ENCODE measurements at regions of chr19 and their contacts with region 1.

Region 1: DNA sequence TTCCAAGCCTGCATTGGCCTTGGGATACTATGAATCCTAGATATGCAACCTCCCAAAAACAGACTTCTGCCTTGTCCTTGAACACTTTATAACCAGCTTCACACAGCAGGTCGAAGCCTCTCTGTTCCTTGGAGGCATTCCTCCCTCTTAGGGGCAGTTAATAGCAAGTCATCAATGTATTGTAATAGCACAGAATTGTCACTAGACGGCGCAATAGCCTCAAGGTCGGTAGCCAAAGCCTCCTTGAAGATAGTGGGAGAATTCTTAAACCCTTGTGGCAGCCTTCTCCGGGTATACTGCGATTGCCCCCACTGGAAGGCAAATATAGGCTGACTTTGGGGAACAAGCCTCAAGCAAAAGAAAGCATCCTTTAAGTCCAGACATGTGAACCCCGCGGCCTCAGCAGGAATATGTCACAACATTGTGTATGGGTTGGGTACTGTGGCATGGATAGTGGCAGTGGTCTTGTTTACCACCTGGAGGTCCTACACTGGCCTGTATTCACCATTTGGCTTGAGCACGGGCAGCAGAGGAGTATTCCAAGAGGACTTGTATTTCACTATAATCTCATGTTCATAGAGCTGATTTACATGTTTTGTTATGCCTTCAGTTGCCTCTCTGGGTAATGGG is 61.1 kb downstream of the ZNF431 start:
- DNase-seq: peak; percentile 74 to 90 (median 79)
- H3K4me3 ChIP-seq: no peak overlapping the region
- H3K27ac ChIP-seq: no peak overlapping the region
- H3K4me1 ChIP-seq: no peaks in the 10 kb centered on the region
- H3K27me3 ChIP-seq: no peaks in the 10 kb centered on the region

Region 2: GRCh38 chr19:21130097-21130775 is 72.7 kb before region 1 on chr19:
- CTCF ChIA-PET with region 1: no interaction called
- POLR2A ChIA-PET with region 1: no interaction called
- DNase-seq: no peak
- H3K4me3 ChIP-seq: no peak overlapping the region
- H3K27ac ChIP-seq: no peak overlapping the region
- H3K4me1 ChIP-seq: peaks cover 0 to 14% (median 0%) of the 10 kb centered on the region in 4 experiments
- H3K27me3 ChIP-seq: no peaks in the 10 kb centered on the region

Region 3: GRCh38 chr19:21474671-21475181 is 271.7 kb after region 1 on chr19:
- CTCF ChIA-PET with region 1: interaction called, 17 read pairs
- POLR2A ChIA-PET with region 1: no interaction called
- DNase-seq: peak; percentile 86 to 93 (median 93)
- H3K4me3 ChIP-seq: peak overlapping the region; percentile 76 to 95 (median 88)
- H3K27ac ChIP-seq: peak overlapping the region in 1 of 2 experiments; percentile 43
- H3K4me1 ChIP-seq: peaks cover 0 to 12% (median 9%) of the 10 kb centered on the region in 4 experiments
- H3K27me3 ChIP-seq: no peaks in the 10 kb centered on the region

Region 4: GRCh38 chr19:21698215-21698614 is 495.2 kb after region 1 on chr19:
- CTCF ChIA-PET with region 1: interaction called, 11 read pairs
- POLR2A ChIA-PET with region 1: no interaction called
- DNase-seq: peak; percentile 54 to 78 (median 65)
- H3K4me3 ChIP-seq: no peak overlapping the region
- H3K27ac ChIP-seq: no peak overlapping the region
- H3K4me1 ChIP-seq: no peaks in the 10 kb centered on the region
- H3K27me3 ChIP-seq: no peaks in the 10 kb centered on the region